ENCODE measurements at regions of chr17 and their contacts with region 1.

Region 1: GRCh38 chr17:55601874-55602364 is 90.7 kb upstream of the SMIM36 start:
- H3K4me3 Mint-ChIP-seq: no peak overlapping the region
- H3K27ac Mint-ChIP-seq: no peak overlapping the region
- H3K4me1 Mint-ChIP-seq: no peaks in the 10 kb centered on the region
- H3K27me3 Mint-ChIP-seq: peaks cover 3% of the 10 kb centered on the region

Region 2: DNA sequence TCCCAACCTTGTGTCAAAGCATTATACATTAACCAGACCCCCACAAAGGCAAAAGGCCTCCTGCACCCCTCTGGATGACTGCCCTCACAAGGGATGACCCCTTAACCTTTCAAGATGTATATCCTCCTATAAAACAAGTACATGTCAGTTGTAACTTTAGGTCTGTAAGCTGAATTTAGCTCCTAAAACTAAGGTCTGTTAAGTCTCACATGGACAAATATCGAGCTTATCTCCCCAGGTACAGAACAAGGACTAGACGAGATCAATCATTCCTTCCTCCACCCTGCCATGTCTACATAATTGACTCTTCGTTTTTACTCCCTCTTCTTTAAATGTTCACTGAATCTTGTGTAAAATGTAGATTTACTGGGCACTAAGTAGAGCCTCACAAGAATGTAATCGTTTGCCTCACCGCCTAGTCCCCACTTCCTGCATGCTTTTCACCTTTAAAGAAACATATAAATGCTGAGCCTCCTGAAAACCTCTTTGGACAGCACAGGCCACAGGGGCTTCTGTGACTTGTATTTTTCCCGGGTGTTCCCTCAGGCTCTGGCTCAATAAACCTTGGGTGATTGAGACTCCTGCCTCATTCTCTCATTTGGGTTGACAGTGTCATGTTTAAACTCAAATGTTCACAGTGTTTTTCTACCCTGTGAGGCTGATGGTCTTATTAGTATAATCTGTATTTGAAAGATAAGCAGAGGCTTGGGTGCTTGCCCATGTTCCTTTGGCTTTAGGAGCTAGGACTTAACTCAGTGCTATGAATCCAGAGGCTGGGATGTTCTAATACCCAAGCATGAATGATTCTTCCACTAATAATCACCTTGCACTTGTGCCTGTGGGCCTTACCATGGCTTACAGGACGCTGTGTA is 217.9 kb before region 1 on chr17:
- intact Hi-C with region 1: no loop called
- H3K4me3 Mint-ChIP-seq: no peak overlapping the region
- H3K27ac Mint-ChIP-seq: no peak overlapping the region
- H3K4me1 Mint-ChIP-seq: no peaks in the 10 kb centered on the region
- H3K27me3 Mint-ChIP-seq: no peaks in the 10 kb centered on the region

Region 3: GRCh38 chr17:55421179-55421934 is 180.6 kb before region 1 on chr17 and contains the start of gene MMD:
- intact Hi-C with region 1: no loop called
- H3K4me3 Mint-ChIP-seq: peak within 1 kb of the TSS; percentile 82
- H3K27ac Mint-ChIP-seq: peak within 1 kb of the TSS; percentile 88
- H3K4me1 Mint-ChIP-seq: peaks cover 78% of the 10 kb centered on the region
- H3K27me3 Mint-ChIP-seq: peaks cover 29% of the 10 kb centered on the region

Region 4: GRCh38 chr17:55432358-55433028 is 169.4 kb before region 1 on chr17:
- intact Hi-C with region 1: no loop called
- H3K4me3 Mint-ChIP-seq: no peak overlapping the region
- H3K27ac Mint-ChIP-seq: no peak overlapping the region
- H3K4me1 Mint-ChIP-seq: peaks cover 41% of the 10 kb centered on the region
- H3K27me3 Mint-ChIP-seq: peaks cover 9% of the 10 kb centered on the region

Region 5: DNA sequence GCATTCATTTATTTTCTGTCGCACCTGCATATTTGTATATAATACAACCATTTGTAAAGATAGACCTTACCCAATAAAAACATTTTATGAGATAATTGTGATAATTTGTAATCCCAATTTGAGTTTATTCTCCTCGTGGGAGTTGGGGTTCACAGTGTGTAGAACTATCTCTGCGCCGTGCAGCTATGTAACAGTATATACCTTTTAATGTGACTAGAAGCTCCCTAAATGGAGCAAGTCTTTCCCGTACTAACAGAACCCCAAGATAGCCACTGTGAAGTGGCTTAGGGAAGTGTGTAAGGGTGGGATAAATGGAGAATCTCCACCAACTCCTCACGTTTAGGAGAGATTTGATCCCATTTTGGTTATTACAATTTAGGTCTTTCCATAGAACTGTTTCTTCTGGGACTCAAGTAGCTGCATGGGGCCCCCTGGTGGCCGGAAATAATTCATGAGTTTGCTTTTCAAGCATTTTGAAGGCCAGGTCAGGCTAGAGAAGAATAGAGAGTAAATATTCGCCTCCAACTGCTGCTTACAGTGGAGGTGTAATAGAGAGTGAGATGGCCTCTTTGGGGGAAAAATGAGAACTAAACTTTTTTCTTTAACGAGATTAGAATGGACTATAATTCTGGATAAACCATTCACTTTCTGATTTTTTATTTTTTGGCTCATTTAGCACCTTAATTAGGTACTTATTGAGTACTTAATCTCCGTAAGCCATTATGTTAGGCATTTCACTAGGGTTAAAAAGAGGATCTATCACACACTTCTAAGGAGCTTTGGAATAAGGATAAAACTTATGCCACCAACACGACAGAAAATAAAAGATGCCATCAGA is 116.2 kb after region 1 on chr17:
- intact Hi-C with region 1: loop called (anchors 5 kb)
- H3K4me3 Mint-ChIP-seq: no peak overlapping the region
- H3K27ac Mint-ChIP-seq: no peak overlapping the region
- H3K4me1 Mint-ChIP-seq: peaks cover 13% of the 10 kb centered on the region
- H3K27me3 Mint-ChIP-seq: peaks cover 18% of the 10 kb centered on the region

Region 6: GRCh38 chr17:55770148-55770870 is 168.4 kb after region 1 on chr17:
- intact Hi-C with region 1: loop called (anchors 2 kb)
- H3K4me3 Mint-ChIP-seq: no peak overlapping the region
- H3K27ac Mint-ChIP-seq: no peak overlapping the region
- H3K4me1 Mint-ChIP-seq: peaks cover 17% of the 10 kb centered on the region
- H3K27me3 Mint-ChIP-seq: no peaks in the 10 kb centered on the region